HepG2 (cell line): ENCODE measurements at regions of chr15 and their contacts with region 1.

Region 1: DNA sequence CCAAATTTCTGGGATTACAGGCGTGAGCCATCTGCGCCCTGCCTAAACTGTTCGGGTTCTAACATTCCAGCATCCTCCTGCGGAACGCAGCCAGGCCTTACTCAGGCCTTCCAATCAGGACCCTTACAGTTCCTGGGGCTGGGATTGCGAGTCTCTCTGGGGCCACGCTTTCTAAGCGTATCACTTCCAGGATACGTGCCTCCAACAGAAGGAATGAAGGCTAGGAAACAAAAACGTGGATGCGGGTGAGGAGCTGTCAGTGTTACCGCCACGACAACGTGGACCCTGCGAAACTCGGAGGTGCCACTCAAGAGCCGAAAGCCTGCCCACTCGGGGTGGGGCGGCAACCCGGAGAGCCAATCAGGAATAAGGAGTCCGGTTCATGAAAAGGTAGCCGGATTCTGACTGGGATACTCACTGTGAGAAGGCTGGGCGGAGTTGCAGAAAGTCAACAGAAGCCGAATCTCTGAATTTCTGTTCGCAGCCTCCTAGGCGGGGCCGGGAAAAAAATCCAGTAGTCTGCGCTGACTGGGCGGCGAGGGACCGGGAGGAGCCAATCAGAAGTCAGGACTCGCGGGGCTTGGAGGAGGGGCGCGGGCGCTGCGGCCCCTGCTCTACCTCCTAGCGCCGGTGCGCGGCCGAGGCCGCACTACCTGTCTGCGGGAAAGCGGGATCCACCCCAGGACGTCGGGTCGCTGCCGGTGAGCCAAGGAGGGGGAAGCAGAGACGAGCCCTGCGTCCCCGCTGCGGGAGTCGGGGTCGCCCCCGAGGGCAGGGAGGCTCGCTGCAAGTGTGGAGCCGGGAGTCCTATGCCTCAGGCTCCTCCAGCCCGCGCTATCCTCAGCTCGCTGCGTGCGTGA is at the start of gene HYKK:
- DNase-seq: peak; percentile 98
- ATAC-seq: peak; percentile 97
- H3K4me3 ChIP-seq: peak within 1 kb of the TSS; percentile 69 to 84 (median 83)
- H3K27ac ChIP-seq: peak within 1 kb of the TSS; percentile 55
- H3K4me1 ChIP-seq: peaks cover 29% of the 10 kb centered on the region
- H3K27me3 ChIP-seq: no peaks in the 10 kb centered on the region; a peak in 1 of 5 replicates
- CTCF ChIP-seq: peak; percentile 34; the same call in 1 of the 2 replicates
- EP300 ChIP-seq: no peak
- POLR2A ChIP-seq: peak; percentile 49 to 82
- RAD21 ChIP-seq: 0 out of 2 replicates have a peak, but pooled peaks have one; percentile 17
- total RNA-seq, gene HYKK: 5.4 and 6.5 TPM in 2 replicates

Region 2: DNA sequence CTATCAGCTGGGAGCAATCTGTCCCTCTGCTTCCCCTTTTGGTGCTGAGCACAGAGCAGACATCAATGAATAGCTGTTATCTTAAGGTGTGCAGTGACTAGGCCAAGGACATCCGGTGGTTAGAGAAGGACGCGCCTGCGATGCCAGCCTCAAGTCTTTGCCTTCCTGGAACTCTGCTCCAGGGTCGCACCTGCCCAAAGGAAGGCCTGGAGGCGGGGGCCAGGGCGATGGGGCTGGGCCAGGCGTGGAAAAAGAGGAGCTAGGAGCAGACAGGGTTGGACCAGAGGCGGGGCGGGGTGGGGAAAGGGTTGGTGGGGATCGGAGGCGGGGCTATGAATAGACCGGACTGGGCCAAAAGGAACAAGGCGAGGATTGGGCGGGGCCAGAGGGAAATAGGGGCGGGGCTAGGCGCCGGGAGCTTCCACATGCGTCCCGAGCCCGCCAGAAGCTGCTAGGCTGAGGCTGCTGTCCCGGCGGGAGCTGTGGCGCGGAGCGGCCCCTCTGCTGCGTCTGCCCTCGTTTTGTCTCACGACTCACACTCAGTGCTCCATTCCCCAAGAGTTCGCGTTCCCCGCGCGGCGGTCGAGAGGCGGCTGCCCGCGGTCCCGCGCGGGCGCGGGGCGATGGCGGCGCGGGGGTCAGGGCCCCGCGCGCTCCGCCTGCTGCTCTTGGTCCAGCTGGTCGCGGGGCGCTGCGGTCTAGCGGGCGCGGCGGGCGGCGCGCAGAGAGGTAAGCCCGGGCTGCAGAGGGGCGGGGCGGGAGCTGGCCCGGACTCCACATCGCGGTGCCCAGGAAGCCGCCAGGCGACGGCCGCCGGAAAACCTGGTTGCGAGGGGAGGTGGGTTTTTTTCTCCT is 58.1 kb after region 1 on chr15 and contains the start of gene CHRNA5:
- CTCF ChIA-PET with region 1: no interaction called
- POLR2A ChIA-PET with region 1: interaction called, 4 read pairs
- in situ Hi-C with region 1: no loop called
- intact Hi-C with region 1: loop called (anchors 10 kb)
- DNase-seq: peak; percentile 75
- ATAC-seq: peak; percentile 91
- H3K4me3 ChIP-seq: peak within 1 kb of the TSS; percentile 61 to 80 (median 73)
- H3K27ac ChIP-seq: no peak within 1 kb of the TSS
- H3K4me1 ChIP-seq: peaks cover 18% of the 10 kb centered on the region
- H3K27me3 ChIP-seq: no peaks in the 10 kb centered on the region
- CTCF ChIP-seq: no peak
- EP300 ChIP-seq: no peak
- POLR2A ChIP-seq: peak; percentile 75 to 79
- RAD21 ChIP-seq: no peak
- total RNA-seq, gene CHRNA5: 5.1 and 10.5 TPM in 2 replicates

Region 3: DNA sequence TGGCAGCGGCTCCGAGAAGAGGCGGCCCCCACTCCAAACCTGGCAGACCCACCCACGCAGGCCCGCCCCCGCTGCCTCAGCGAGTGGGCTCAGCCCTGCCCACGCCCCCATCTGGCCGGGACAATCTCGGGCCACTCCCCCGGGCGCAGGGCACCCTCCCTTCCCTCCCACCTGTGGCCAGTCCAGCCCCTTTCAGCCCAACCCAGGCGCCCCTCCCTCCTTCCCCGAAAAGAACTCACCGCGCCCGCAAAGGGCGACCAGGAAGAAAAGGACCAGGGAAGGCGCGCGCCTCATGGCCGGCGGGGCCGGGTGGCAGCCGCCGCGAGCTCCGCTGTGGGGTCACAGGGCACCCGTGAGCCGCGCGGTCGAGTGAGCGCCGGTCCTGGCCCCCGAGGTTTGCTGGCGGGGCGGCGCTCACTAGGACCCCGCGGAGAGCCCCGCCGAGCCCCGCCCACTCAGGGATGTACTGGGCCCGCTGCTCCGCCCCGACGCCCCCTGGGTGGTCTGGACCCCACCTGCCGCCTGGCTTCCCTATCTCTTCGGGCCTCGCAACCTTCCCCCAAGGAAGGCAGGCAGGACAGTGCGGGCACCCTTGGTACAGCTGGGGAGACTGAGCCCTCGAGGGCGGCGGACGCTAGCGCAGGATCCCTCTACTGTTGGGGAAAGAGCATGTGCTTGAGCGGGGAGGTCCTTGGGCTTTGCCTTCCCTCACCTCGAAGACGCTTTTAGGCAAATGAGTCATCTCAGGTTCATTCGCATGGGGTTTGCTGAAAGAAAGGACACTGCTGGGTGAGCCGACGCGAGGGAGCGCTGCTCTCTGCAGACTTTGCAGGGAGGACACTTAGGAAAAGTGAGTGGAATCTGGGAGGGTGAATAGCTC is 133.9 kb after region 1 on chr15 and contains the start of gene CHRNB4:
- CTCF ChIA-PET with region 1: no interaction called
- POLR2A ChIA-PET with region 1: no interaction called
- in situ Hi-C with region 1: no loop called
- intact Hi-C with region 1: no loop called
- DNase-seq: no peak
- ATAC-seq: no peak
- H3K4me3 ChIP-seq: no peak within 1 kb of the TSS
- H3K27ac ChIP-seq: no peak within 1 kb of the TSS
- H3K4me1 ChIP-seq: no peaks in the 10 kb centered on the region
- H3K27me3 ChIP-seq: no peaks in the 10 kb centered on the region; a peak in 2 of 5 replicates
- CTCF ChIP-seq: no peak
- EP300 ChIP-seq: no peak
- POLR2A ChIP-seq: no peak
- RAD21 ChIP-seq: no peak
- total RNA-seq, gene CHRNB4: not detected in 2 replicates